ENCODE measurements at regions of chr12 and their contacts with region 1.

Region 1: DNA sequence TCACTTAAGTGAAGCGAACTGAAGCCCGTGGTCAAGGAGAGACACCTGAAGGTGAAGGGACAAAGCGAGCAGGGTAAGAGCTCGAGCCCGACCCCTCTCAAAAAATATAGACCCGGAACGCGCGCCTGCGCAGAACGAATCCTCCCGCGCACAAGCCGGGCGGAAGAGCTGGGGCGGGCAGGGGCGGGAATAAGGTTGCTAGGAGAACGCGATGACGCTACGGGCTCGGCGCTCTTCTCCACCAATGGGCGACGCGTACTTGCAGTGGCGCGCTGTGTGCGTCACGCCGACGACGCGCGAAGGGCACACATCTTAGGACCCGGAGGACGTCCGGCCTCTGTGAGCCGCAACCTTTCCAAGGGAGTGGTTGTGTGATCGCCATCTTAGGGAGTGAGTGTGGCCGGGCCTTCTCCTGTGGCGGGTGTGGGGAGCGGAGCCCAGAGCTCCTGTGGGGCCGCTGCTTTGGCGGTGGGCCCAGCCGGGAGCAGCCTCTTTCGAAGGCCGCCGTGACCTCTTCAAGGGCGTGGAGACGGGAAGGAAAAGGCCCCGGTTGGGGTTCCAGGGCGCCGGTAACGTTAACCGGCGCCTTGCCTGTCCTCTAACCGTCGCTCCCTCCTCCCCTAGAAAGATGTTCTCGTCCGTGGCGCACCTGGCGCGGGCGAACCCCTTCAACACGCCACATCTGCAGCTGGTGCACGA is at the start of gene SLC25A3:
- DNase-seq: peak; percentile 96 to 99 (median 97)
- H3K4me3 ChIP-seq: peak within 1 kb of the TSS; percentile 63 to 96 (median 80)
- H3K27ac ChIP-seq: peak within 1 kb of the TSS; percentile 88 to 99 (median 99)
- H3K4me1 ChIP-seq: peaks cover 9 to 26% of the 10 kb centered on the region in 2 donors
- H3K27me3 ChIP-seq: no peaks in the 10 kb centered on the region
- CTCF ChIP-seq: peak in 1 of 6 experiments; percentile 1
- POLR2A ChIP-seq: peak; percentile 98 to 99
- total RNA-seq, gene SLC25A3: 674 to 1,555 (median 728) TPM

Region 2: GRCh38 chr12:98644711-98645402 is 51.4 kb after region 1 on chr12 and contains the starts of genes APAF1 and IKBIP:
- intact Hi-C with region 1: loop called (anchors 10 kb)
- DNase-seq: peak; percentile 96 to 98 (median 97)
- H3K4me3 ChIP-seq: peak within 1 kb of the TSS; percentile 50 to 88 (median 69)
- H3K27ac ChIP-seq: peak within 1 kb of the TSS; percentile 33 to 84 (median 74)
- H3K4me1 ChIP-seq: peaks cover 10 to 12% of the 10 kb centered on the region in 2 donors
- H3K27me3 ChIP-seq: no peaks in the 10 kb centered on the region
- CTCF ChIP-seq: no peak
- POLR2A ChIP-seq: peak; percentile 63 to 91
- total RNA-seq, gene APAF1: 5.5 to 16.5 (median 10.4) TPM
- total RNA-seq, gene IKBIP: 7.2 to 22.9 (median 12.2) TPM

Region 3: GRCh38 chr12:98725476-98726247 is 132.2 kb after region 1 on chr12:
- intact Hi-C with region 1: no loop called
- DNase-seq: peak; percentile 48 to 68 (median 59)
- H3K4me3 ChIP-seq: no peak overlapping the region
- H3K27ac ChIP-seq: peak overlapping the region in 1 of 5 donors; percentile 6
- H3K4me1 ChIP-seq: peaks cover 0 to 11% of the 10 kb centered on the region in 2 donors
- H3K27me3 ChIP-seq: no peaks in the 10 kb centered on the region
- CTCF ChIP-seq: peak in 4 of 6 experiments; percentile 20 to 47 (median 40)
- POLR2A ChIP-seq: no peak

Region 4: DNA sequence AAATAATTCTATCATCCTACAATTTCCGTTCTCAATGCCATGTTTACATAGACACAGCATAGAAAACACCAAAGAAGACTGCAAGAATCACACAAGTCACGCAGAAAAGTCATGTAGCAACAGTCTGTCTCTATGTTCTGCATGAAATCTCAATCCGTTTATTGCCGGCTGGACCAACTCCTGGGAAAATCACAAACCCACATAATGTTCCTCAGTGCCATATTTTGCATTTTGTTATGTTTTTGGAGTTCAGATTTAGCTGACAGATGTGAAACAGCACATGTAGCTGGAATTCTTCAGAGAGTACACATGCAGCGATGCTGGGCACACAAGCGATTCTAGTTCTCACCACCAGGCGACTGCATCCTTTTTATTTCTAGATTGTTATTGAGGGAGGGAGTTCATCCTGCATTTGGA is 244.7 kb after region 1 on chr12:
- intact Hi-C with region 1: no loop called
- DNase-seq: no peak
- H3K4me3 ChIP-seq: no peak overlapping the region
- H3K27ac ChIP-seq: no peak overlapping the region
- H3K4me1 ChIP-seq: no peaks in the 10 kb centered on the region
- H3K27me3 ChIP-seq: no peaks in the 10 kb centered on the region
- CTCF ChIP-seq: peak in 1 of 6 experiments; percentile 24
- POLR2A ChIP-seq: no peak